ENCODE measurements at regions of chr1 and their contacts with region 1.

Region 1: GRCh38 chr1:91924146-91924545 is 25.1 kb upstream of the BRDT start:
- DNase-seq: no peak
- H3K4me3 ChIP-seq: no peak overlapping the region
- H3K27ac ChIP-seq: no peak overlapping the region
- H3K4me1 ChIP-seq: peaks cover under 1% of the 10 kb centered on the region
- H3K27me3 ChIP-seq: no peaks in the 10 kb centered on the region
- CTCF ChIP-seq: no peak

Region 2: GRCh38 chr1:91173346-91173890 is 750.7 kb before region 1 on chr1:
- CTCF ChIA-PET with region 1: no interaction called
- POLR2A ChIA-PET with region 1: no interaction called
- intact Hi-C with region 1: loop called (anchors 10 kb)
- DNase-seq: peak; percentile 68
- H3K4me3 ChIP-seq: no peak overlapping the region
- H3K27ac ChIP-seq: no peak overlapping the region
- H3K4me1 ChIP-seq: peaks cover 24% of the 10 kb centered on the region
- H3K27me3 ChIP-seq: no peaks in the 10 kb centered on the region
- CTCF ChIP-seq: no peak

Region 3: GRCh38 chr1:91282695-91283420 is 641.3 kb before region 1 on chr1:
- CTCF ChIA-PET with region 1: no interaction called
- POLR2A ChIA-PET with region 1: no interaction called
- intact Hi-C with region 1: loop called (anchors 1 kb)
- DNase-seq: peak; percentile 83
- H3K4me3 ChIP-seq: no peak overlapping the region
- H3K27ac ChIP-seq: no peak overlapping the region
- H3K4me1 ChIP-seq: no peaks in the 10 kb centered on the region
- H3K27me3 ChIP-seq: no peaks in the 10 kb centered on the region
- CTCF ChIP-seq: peak; percentile 84

Region 4: GRCh38 chr1:91440845-91441244 is 483.3 kb before region 1 on chr1:
- CTCF ChIA-PET with region 1: no interaction called
- POLR2A ChIA-PET with region 1: no interaction called
- intact Hi-C with region 1: loop called (anchors 10 kb)
- DNase-seq: peak; percentile 40
- H3K4me3 ChIP-seq: no peak overlapping the region
- H3K27ac ChIP-seq: no peak overlapping the region
- H3K4me1 ChIP-seq: no peaks in the 10 kb centered on the region
- H3K27me3 ChIP-seq: no peaks in the 10 kb centered on the region
- CTCF ChIP-seq: peak; percentile 58

Region 5: DNA sequence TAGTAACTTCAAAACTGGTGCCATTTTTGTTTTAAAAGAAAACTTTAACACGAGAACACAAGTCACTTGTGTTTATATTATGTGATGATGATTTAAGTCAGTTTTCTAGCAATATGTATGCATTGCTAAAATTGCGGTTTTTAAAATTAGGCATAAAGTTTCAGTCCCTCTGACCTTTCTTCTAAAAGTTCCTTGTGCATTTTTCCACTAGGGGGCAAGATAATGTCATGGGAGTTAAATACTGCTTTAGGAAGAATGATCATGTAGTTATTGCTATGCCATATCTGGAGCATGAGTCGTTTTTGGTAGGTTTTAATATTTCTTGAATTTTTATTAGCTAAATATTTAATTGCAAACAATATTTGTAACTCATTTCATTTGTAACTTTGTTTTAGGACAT is 412.8 kb before region 1 on chr1:
- CTCF ChIA-PET with region 1: interaction called, 6 read pairs
- POLR2A ChIA-PET with region 1: no interaction called
- intact Hi-C with region 1: loop called (anchors 1 kb)
- DNase-seq: peak; percentile 66
- H3K4me3 ChIP-seq: no peak overlapping the region
- H3K27ac ChIP-seq: no peak overlapping the region
- H3K4me1 ChIP-seq: peaks cover 21% of the 10 kb centered on the region
- H3K27me3 ChIP-seq: no peaks in the 10 kb centered on the region
- CTCF ChIP-seq: peak; percentile 71

Region 6: GRCh38 chr1:91851130-91852010 is 72.8 kb before region 1 on chr1:
- CTCF ChIA-PET with region 1: no interaction called
- POLR2A ChIA-PET with region 1: no interaction called
- intact Hi-C with region 1: no loop called
- DNase-seq: peak; percentile 62
- H3K4me3 ChIP-seq: peak overlapping the region; percentile 14
- H3K27ac ChIP-seq: no peak overlapping the region
- H3K4me1 ChIP-seq: peaks cover 6% of the 10 kb centered on the region
- H3K27me3 ChIP-seq: no peaks in the 10 kb centered on the region
- CTCF ChIP-seq: no peak

Measured in A673 (cell line).